ENCODE measurements at regions of chr12 and their contacts with region 1.

Region 1: DNA sequence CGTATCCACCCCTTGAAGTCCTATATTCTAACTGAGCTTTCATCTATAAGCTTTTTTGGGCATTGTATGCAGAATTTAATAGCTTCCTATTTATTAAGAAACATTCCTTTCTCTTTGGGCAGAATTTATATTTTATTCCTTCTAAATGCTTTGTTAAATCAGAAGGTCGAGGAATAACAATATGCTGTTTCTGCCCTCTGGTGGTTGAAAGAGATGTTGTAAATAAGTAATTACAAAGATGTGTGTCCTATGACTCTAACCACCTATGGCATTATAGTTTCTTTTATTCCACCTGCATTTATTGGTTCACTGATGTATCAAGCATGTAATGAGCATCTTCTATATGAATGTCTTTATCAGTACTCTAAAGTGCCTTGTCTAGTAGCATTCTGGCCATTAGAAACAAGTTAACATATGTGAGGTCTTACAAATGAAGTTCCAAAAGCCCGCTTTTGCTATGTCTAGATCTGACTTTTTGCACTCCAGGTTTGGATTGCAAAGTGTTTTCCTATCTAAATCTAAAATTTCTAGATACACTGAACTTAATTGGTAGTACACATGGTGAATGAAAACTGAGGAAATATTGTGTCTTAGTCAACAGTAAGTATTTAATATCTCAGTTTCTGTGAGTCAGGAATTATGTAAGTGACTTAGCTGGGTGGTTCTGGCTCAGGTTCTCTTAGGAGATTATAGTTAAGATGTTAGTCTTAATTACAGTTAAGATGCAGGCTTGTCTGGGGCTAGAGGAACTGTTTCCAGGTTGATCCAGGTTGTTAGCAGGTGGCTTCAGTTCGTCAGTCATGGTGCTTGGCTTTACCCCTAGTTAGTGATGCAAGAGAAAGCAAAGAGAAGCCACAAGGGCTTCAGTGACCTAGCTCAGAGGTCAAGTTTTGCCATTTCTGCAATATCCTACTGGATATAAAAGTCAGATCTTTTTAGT is 57.5 kb downstream of the PLEKHA5 start:
- DNase-seq: no peak
- H3K4me3 ChIP-seq: no peak overlapping the region; a peak in 1 of 8 replicates
- H3K27ac ChIP-seq: no peak overlapping the region
- H3K4me1 ChIP-seq: peaks cover 0 to 33% (median 10%) of the 10 kb centered on the region in 4 experiments; a peak in 6 of 7 replicates
- H3K27me3 ChIP-seq: peaks cover 0 to 1% (median 0%) of the 10 kb centered on the region in 4 experiments; a peak in 1 of 7 replicates
- CTCF ChIP-seq: peak in 2 of 3 experiments; percentile 25 to 49; a peak in 2 of 4 replicates
- EP300 ChIP-seq: no peak
- POLR2A ChIP-seq: no peak
- RAD21 ChIP-seq: peak; percentile 59 to 66

Region 2: DNA sequence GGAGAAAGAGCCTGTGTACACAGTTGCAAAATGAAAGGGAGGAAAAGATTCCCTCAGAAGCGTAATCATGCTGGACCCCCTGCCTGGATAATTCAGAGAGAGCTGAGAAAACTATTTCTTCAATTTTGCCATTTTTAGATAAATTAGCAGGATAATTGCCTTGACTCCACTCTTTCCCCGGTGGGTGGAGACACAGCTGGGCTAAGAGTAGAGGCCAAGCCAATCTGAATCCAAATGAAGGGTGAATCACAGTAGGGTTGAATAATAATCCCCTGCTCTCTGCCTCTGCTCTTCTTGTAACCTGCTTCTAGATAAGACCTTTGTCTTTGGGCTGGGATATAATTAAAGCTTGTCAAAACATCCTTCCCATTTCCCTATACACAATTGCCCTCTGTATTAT is 298.9 kb before region 1 on chr12:
- CTCF ChIA-PET with region 1: interaction called, 12 read pairs
- POLR2A ChIA-PET with region 1: interaction called, 3 read pairs
- DNase-seq: no peak
- H3K4me3 ChIP-seq: no peak overlapping the region
- H3K27ac ChIP-seq: no peak overlapping the region
- H3K4me1 ChIP-seq: peaks cover 0 to 9% (median 4%) of the 10 kb centered on the region in 4 experiments; a peak in 5 of 7 replicates
- H3K27me3 ChIP-seq: no peaks in the 10 kb centered on the region
- CTCF ChIP-seq: no peak
- EP300 ChIP-seq: no peak
- POLR2A ChIP-seq: no peak
- RAD21 ChIP-seq: peak in 1 of 2 experiments; percentile 39; a peak in 2 of 4 replicates

Region 3: DNA sequence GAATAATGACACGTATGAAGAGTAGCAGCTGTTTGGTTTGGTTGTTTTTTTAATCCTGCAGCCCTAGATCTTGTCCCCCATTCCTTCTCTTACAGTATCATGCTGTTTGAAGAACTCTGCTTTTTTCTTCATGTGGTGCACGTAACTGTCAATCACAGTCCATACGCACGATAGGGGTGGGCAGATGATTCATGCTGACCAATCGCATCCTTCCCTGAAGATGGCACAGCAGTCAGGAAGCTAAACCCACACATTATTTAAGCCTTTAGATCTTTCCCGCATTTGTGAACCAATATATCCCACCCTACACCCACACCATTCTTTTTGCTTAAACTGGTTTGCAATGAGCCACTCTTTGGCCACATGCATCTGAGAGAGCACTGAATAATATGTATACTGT is 216.4 kb before region 1 on chr12:
- CTCF ChIA-PET with region 1: no interaction called
- POLR2A ChIA-PET with region 1: no interaction called
- DNase-seq: no peak
- H3K4me3 ChIP-seq: no peak overlapping the region
- H3K27ac ChIP-seq: no peak overlapping the region
- H3K4me1 ChIP-seq: peaks cover 5 to 20% (median 11%) of the 10 kb centered on the region in 4 experiments; a peak in 4 of 7 replicates
- H3K27me3 ChIP-seq: peaks cover 0 to 2% (median 0%) of the 10 kb centered on the region in 4 experiments; a peak in 1 of 7 replicates
- CTCF ChIP-seq: no peak
- EP300 ChIP-seq: no peak
- POLR2A ChIP-seq: no peak
- RAD21 ChIP-seq: no peak

Region 4: DNA sequence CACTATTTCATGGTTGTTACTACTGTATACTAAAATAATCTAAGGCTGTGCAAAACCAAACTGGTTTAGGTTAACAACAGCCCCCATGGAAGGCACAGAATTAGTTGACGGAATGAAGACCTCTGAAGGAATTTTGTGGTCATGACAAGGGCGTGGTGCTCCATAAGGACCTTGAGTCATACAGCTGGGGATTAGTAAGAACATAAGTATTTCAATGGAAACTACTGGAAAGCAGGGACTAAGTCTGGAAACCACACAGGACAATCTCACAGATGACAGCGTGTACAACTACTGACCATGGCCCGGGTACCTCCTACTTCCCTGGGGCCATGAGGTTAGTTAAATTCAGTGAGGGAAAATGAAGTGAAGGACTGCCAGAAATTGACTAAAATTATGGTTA is 156.0 kb before region 1 on chr12:
- CTCF ChIA-PET with region 1: no interaction called
- POLR2A ChIA-PET with region 1: no interaction called
- DNase-seq: no peak
- H3K4me3 ChIP-seq: no peak overlapping the region
- H3K27ac ChIP-seq: no peak overlapping the region
- H3K4me1 ChIP-seq: peaks cover 0 to 5% (median 2%) of the 10 kb centered on the region in 4 experiments; a peak in 3 of 7 replicates
- H3K27me3 ChIP-seq: no peaks in the 10 kb centered on the region
- CTCF ChIP-seq: no peak
- EP300 ChIP-seq: no peak
- POLR2A ChIP-seq: no peak
- RAD21 ChIP-seq: no peak

Region 5: GRCh38 chr12:19196959-19197630 is 10.1 kb after region 1 on chr12:
- CTCF ChIA-PET with region 1: interaction called, 13 read pairs
- POLR2A ChIA-PET with region 1: interaction called, 3 read pairs
- DNase-seq: no peak
- H3K4me3 ChIP-seq: no peak overlapping the region
- H3K27ac ChIP-seq: no peak overlapping the region
- H3K4me1 ChIP-seq: peaks cover 0 to 3% (median 0%) of the 10 kb centered on the region in 4 experiments; a peak in 2 of 7 replicates
- H3K27me3 ChIP-seq: no peaks in the 10 kb centered on the region
- CTCF ChIP-seq: no peak
- EP300 ChIP-seq: no peak
- POLR2A ChIP-seq: no peak
- RAD21 ChIP-seq: no peak